Breast epithelium (tissue), 4 donors: ENCODE measurements at regions of chr10 and their contacts with region 1.

Region 1: DNA sequence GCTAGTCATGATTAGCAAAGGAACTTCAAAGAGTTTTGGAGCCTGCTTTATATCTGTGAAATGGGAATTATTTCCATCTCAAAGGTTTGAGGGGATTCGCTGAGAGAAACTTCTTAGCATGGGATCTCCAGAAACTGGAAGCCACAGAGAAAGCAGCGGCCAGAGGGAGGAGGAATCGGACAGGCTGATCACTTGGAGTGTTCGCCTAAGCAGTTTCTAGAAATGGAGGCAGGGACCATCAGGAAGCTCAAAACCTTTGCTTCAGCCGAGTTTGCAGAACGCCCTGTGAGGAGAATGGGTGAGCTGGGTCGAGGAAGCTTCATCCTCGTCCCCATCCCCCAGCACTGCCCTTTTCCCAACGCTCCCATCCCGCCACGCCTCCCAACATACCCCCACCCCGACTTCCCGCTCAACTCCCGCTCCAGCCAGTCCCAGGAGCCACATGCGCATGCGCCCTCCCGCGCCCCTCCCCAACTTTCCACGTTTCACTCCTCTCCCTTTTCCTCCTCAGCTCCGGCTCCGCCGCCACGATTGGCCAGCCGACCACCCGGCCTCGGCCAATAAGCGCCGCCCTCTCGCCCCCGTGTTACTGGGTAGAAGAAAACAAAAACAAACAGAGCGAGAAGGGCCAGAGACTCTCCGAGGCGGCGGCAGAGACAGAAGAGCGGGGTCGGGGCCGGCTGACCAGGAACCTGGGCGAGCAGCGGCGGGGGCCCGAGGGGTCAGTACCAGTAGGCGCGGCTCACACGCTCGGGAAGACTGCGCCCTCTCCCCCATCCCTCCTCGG is at the start of gene PDCD4:
- DNase-seq: peak; percentile 99 to 100
- H3K4me3 ChIP-seq: peak within 1 kb of the TSS; percentile 94 to 99 (median 98)
- H3K27ac ChIP-seq: peak within 1 kb of the TSS; percentile 100
- H3K4me1 ChIP-seq: peaks cover 0 to 1% of the 10 kb centered on the region in 2 donors
- H3K27me3 ChIP-seq: no peaks in the 10 kb centered on the region
- CTCF ChIP-seq: no peak
- POLR2A ChIP-seq: peak; percentile 94
- total RNA-seq, gene PDCD4: 101 to 319 (median 161) TPM

Region 2: GRCh38 chr10:110746254-110746826 is 125.2 kb before region 1 on chr10:
- intact Hi-C with region 1: loop called (anchors 10 kb)
- DNase-seq: peak; percentile 63 to 76
- H3K4me3 ChIP-seq: no peak overlapping the region
- H3K27ac ChIP-seq: peak overlapping the region; percentile 56 to 67
- H3K4me1 ChIP-seq: no peaks in the 10 kb centered on the region
- H3K27me3 ChIP-seq: no peaks in the 10 kb centered on the region
- CTCF ChIP-seq: peak; percentile 88 to 93 (median 91)
- POLR2A ChIP-seq: no peak

Region 3: DNA sequence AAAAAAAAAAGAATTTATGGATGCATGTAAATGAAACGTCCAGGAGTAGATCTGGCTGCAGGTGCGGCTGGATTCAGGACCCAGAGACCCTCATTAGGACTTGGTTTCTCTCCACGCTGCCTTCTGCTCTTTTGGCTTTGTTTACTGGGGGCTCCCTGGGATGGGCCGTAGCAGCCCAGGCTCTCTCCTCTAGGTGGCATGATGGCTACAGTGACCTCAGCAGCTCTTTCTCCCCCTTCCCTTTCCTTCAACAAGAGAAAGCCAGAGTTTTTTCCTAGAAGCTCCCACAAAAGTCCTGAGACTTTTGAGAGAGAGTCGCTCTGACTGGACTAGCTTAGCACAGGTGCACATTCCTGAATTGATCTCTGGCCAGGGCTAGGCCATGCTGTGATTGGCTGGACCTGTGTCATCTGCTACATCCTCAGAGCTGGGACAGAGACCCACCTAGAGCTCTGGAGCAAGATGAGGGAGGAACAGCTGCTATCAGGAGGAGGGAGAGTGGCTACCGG is 67.6 kb before region 1 on chr10:
- intact Hi-C with region 1: loop called (anchors 5 kb)
- DNase-seq: peak in 1 of 2 donors; percentile 41
- H3K4me3 ChIP-seq: no peak overlapping the region
- H3K27ac ChIP-seq: peak overlapping the region; percentile 62 to 68
- H3K4me1 ChIP-seq: peaks cover 0 to 11% of the 10 kb centered on the region in 2 donors
- H3K27me3 ChIP-seq: no peaks in the 10 kb centered on the region
- CTCF ChIP-seq: peak in 2 of 3 donors; percentile 37 to 60
- POLR2A ChIP-seq: no peak

Region 4: DNA sequence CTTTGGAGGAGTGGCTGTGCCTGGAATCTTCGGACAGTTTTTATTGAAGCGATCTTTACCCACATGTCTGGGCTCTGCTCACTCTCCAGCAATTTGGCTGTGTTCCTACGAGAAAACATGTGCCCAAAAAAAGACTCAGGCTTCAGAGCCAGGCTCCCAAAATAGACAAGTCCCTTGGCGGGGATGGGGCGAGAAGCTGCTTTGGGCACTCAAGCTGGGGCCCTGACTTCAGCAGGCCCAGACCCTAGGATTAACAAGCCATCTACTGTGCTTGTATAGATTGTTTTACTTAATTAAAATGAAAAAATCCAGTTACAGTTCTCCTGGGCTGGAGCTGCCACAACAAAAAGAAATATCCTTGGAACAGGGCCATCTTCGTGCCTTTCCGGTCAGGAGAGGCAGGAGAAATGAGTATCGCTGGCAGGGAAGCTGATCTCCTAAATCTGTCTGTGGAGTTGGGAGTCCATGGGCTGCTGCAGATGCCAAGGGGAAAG is 51.1 kb before region 1 on chr10:
- intact Hi-C with region 1: loop called (anchors 5 kb)
- DNase-seq: peak in 1 of 2 donors; percentile 63
- H3K4me3 ChIP-seq: peak overlapping the region in 1 of 3 donors; percentile 26
- H3K27ac ChIP-seq: peak overlapping the region; percentile 88 to 93
- H3K4me1 ChIP-seq: peaks cover 3 to 59% of the 10 kb centered on the region in 2 donors
- H3K27me3 ChIP-seq: no peaks in the 10 kb centered on the region
- CTCF ChIP-seq: no peak
- POLR2A ChIP-seq: no peak

Region 5: DNA sequence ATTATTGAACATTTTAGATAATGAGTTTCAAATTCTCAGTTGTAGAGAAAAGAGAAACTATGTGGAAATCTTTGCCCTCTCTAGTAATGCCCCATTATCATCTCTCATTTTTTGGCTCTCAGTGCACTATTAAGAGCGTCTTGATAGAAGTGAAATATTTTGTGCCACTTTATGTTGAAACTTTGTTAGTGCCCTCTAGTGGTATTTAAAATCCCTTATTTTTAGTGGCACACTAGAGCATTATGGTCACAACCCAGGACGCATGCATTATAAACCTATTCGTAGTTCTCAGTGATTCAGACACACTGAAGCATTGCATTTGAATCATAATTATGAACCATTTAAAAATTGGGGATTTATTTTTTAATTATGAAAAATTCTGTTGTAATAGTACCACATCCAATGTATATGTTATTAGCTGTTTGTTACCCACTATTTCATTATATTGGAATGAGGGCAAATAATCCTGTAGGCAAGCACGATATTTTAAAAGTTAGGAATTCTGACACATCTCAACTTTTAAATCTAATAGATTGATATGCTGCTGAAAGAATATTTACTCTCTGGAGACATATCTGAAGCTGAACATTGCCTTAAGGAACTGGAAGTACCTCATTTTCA is 22.2 kb after region 1 on chr10:
- intact Hi-C with region 1: loop called (anchors 2 kb)
- DNase-seq: no peak
- H3K4me3 ChIP-seq: no peak overlapping the region
- H3K27ac ChIP-seq: no peak overlapping the region
- H3K4me1 ChIP-seq: no peaks in the 10 kb centered on the region
- H3K27me3 ChIP-seq: no peaks in the 10 kb centered on the region
- CTCF ChIP-seq: peak in 2 of 3 donors; percentile 53 to 63
- POLR2A ChIP-seq: no peak

Region 6: DNA sequence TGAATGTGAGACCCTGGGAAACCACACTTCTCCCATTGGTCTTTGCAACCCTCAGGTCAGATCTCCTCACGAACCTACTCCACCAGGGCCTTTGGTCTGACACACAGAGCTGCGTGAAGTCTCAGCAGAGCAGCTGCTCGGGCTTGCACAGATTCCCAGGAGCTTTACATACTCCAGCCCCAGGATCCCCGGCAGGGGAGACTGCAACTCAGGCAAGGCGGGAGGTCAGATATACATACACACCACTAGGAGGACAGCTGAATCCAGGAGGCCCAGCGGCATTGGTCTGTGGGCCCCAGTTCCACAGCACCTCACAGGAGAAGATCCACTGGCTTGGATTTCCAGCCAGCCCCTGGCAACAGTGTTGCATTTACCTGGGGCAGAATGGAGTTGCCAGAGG is 1072.8 kb after region 1 on chr10:
- intact Hi-C with region 1: no loop called
- DNase-seq: no peak
- H3K4me3 ChIP-seq: no peak overlapping the region
- H3K27ac ChIP-seq: no peak overlapping the region
- H3K4me1 ChIP-seq: no peaks in the 10 kb centered on the region
- H3K27me3 ChIP-seq: no peaks in the 10 kb centered on the region
- CTCF ChIP-seq: no peak
- POLR2A ChIP-seq: no peak